MCF 10A (cell line): ENCODE measurements at regions of chr4 and their contacts with region 1.

Region 1: GRCh38 chr4:7067452-7068278 is at the start of gene GRPEL1:
- DNase-seq: peak; percentile 100
- H3K4me3 Mint-ChIP-seq: peak within 1 kb of the TSS; percentile 90
- H3K27ac Mint-ChIP-seq: peak within 1 kb of the TSS; percentile 59
- H3K4me1 Mint-ChIP-seq: peaks cover 23% of the 10 kb centered on the region
- H3K27me3 Mint-ChIP-seq: peaks cover 14% of the 10 kb centered on the region
- CTCF ChIP-seq: no peak
- total RNA-seq, gene GRPEL1: 73.0 and 82.9 TPM in 2 replicates

Region 2: DNA sequence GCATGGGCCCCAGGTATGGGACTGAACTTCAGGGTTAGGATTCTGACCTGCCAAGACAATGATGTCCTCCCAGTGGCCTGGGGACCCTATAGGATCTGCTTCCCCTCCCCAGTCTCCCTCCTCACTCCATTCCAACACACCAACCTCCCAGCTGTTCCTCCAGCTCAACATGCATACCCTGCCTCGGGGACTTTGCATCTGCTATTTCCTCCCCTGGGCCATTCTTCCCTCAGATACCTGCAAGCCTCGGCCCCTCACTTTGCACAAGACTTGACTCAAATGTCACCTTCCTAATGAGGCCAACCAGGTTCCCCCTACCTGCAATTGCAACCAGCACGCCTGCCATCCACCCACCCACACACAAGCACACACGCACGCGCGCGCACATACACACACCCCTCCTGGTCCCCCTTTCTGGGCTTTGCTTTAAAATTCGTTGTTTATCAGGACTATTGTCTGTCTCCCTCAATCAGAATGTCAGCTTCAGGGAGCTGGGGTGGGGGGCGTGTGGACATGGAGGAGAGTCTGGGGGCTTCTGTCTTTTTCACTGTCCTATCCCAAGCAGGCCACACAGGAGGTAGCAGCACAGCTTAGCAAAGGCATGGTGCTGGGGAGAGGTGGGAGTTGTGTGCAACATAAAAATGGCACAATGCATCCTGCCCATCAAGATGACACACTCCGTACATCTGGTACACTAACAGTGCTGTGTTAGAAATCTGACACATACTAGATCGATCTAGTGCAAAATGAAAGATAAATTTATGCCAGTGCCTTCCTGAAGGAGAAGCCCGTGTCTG is 574.6 kb before region 1 on chr4:
- CTCF ChIA-PET with region 1: no interaction called
- POLR2A ChIA-PET with region 1: no interaction called
- intact Hi-C with region 1: no loop called
- DNase-seq: no peak
- H3K4me3 Mint-ChIP-seq: peak overlapping the region; percentile 66
- H3K27ac Mint-ChIP-seq: peak overlapping the region; percentile 82
- H3K4me1 Mint-ChIP-seq: peaks cover 13% of the 10 kb centered on the region
- H3K27me3 Mint-ChIP-seq: peaks cover 18% of the 10 kb centered on the region
- CTCF ChIP-seq: no peak

Region 3: GRCh38 chr4:6716018-6716911 is 351.4 kb before region 1 on chr4 and contains the start of gene BLOC1S4:
- CTCF ChIA-PET with region 1: interaction called, 48 read pairs
- POLR2A ChIA-PET with region 1: interaction called, 31 read pairs
- intact Hi-C with region 1: loop called (anchors 1 kb)
- DNase-seq: peak; percentile 87
- H3K4me3 Mint-ChIP-seq: peak within 1 kb of the TSS; percentile 80
- H3K27ac Mint-ChIP-seq: peak within 1 kb of the TSS; percentile 81
- H3K4me1 Mint-ChIP-seq: peaks cover 13% of the 10 kb centered on the region
- H3K27me3 Mint-ChIP-seq: no peaks in the 10 kb centered on the region
- CTCF ChIP-seq: no peak
- total RNA-seq, gene BLOC1S4: 10.6 and 13.0 TPM in 2 replicates

Region 4: DNA sequence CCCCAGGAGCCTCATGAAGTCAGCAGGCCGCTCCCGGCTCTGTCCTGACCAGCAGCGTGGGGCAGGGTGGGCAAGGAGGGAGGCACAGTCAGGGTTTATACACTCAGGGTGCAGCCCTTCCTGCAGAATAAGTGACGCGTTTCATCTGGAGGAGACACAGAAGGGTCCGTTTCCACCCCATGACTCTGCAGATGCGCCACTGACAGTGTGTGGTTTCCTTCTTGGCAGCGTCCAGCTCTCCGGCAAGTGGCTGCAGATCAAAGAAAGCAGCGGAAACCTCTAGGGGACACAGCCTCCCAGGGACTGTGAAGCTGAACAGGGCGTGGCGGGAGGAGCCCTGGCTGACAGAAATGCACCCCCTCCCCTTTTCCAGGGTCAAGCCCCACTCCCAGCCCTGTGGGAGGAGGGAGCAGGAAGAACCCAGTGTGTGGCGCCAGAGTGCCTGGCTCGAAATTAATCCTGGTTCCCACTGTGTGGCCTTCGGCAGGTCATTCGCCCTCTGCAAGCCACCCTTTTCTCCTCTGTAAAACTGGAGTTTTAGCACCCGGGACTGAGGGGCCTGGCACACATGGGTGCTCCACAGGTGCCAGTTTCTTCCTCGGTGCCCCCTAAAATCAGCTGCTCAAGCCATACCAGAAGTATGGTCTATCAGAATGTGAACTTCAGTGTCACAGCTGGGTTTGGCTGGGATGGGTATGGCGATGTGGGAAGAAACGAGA is 175.3 kb before region 1 on chr4:
- CTCF ChIA-PET with region 1: interaction called, 5 read pairs
- POLR2A ChIA-PET with region 1: no interaction called
- intact Hi-C with region 1: loop called (anchors 5 kb)
- DNase-seq: no peak
- H3K4me3 Mint-ChIP-seq: no peak overlapping the region
- H3K27ac Mint-ChIP-seq: no peak overlapping the region
- H3K4me1 Mint-ChIP-seq: peaks cover 4% of the 10 kb centered on the region
- H3K27me3 Mint-ChIP-seq: no peaks in the 10 kb centered on the region
- CTCF ChIP-seq: no peak

Region 5: GRCh38 chr4:6974138-6974848 is 93.4 kb before region 1 on chr4:
- CTCF ChIA-PET with region 1: interaction called, 74 read pairs
- POLR2A ChIA-PET with region 1: interaction called, 15 read pairs
- intact Hi-C with region 1: loop called (anchors 1 kb)
- DNase-seq: peak; percentile 87
- H3K4me3 Mint-ChIP-seq: no peak overlapping the region
- H3K27ac Mint-ChIP-seq: no peak overlapping the region
- H3K4me1 Mint-ChIP-seq: no peaks in the 10 kb centered on the region
- H3K27me3 Mint-ChIP-seq: no peaks in the 10 kb centered on the region
- CTCF ChIP-seq: peak; percentile 95

Region 6: GRCh38 chr4:7021930-7022658 is 45.6 kb before region 1 on chr4:
- CTCF ChIA-PET with region 1: interaction called, 5 read pairs
- POLR2A ChIA-PET with region 1: interaction called, 11 read pairs
- intact Hi-C with region 1: no loop called
- DNase-seq: peak; percentile 77
- H3K4me3 Mint-ChIP-seq: peak overlapping the region; percentile 30
- H3K27ac Mint-ChIP-seq: peak overlapping the region; percentile 82
- H3K4me1 Mint-ChIP-seq: peaks cover 11% of the 10 kb centered on the region
- H3K27me3 Mint-ChIP-seq: no peaks in the 10 kb centered on the region
- CTCF ChIP-seq: no peak

Region 7: GRCh38 chr4:7055990-7056325 is 11.7 kb before region 1 on chr4:
- CTCF ChIA-PET with region 1: interaction called, 7 read pairs
- POLR2A ChIA-PET with region 1: interaction called, 16 read pairs
- intact Hi-C with region 1: no loop called
- DNase-seq: no peak
- H3K4me3 Mint-ChIP-seq: no peak overlapping the region
- H3K27ac Mint-ChIP-seq: no peak overlapping the region
- H3K4me1 Mint-ChIP-seq: peaks cover 4% of the 10 kb centered on the region
- H3K27me3 Mint-ChIP-seq: no peaks in the 10 kb centered on the region
- CTCF ChIP-seq: no peak